Transverse colon (tissue), 4 donors: ENCODE measurements at regions of chr17 and their contacts with region 1.

Region 1: GRCh38 chr17:56108811-56109284 is 44.4 kb upstream of the ANKFN1 start:
- DNase-seq: no peak
- H3K4me3 ChIP-seq: no peak overlapping the region
- H3K27ac ChIP-seq: peak overlapping the region in 3 of 4 donors; percentile 31 to 57 (median 53)
- H3K4me1 ChIP-seq: peaks cover 7 to 37% (median 14%) of the 10 kb centered on the region in 4 donors
- H3K27me3 ChIP-seq: no peaks in the 10 kb centered on the region
- CTCF ChIP-seq: no peak
- EP300 ChIP-seq: no peak
- POLR2A ChIP-seq: no peak

Region 2: GRCh38 chr17:55067697-55068439 is 1041.0 kb before region 1 on chr17:
- in situ Hi-C with region 1: no loop called
- intact Hi-C with region 1: no loop called
- DNase-seq: no peak
- H3K4me3 ChIP-seq: no peak overlapping the region
- H3K27ac ChIP-seq: no peak overlapping the region
- H3K4me1 ChIP-seq: no peaks in the 10 kb centered on the region
- H3K27me3 ChIP-seq: no peaks in the 10 kb centered on the region
- CTCF ChIP-seq: no peak
- EP300 ChIP-seq: no peak
- POLR2A ChIP-seq: no peak

Region 3: DNA sequence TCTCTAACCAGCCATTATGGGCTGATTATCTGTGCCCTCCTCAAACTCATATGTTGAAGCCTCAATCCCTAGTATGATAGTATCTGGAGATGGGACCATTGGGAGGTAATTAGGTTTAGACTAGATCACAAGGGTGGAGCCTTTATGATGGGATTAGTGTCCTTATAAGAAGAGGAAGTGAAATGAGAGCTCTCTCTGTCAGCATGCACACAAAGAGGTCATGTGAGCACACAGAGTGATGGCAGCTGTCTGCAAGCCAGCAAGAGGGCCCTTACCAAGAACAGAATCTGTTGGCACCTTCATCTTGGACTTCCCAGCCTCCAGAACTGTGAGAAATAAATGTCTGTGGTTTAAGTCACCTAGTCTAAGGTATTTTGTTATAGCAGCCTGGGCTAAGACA is 256.1 kb before region 1 on chr17:
- in situ Hi-C with region 1: loop called in 1 of 4 experiments (anchors 25 kb)
- intact Hi-C with region 1: no loop called
- DNase-seq: no peak
- H3K4me3 ChIP-seq: no peak overlapping the region
- H3K27ac ChIP-seq: no peak overlapping the region
- H3K4me1 ChIP-seq: no peaks in the 10 kb centered on the region
- H3K27me3 ChIP-seq: no peaks in the 10 kb centered on the region
- CTCF ChIP-seq: no peak
- EP300 ChIP-seq: no peak
- POLR2A ChIP-seq: no peak